K562 (cell line): ENCODE measurements at regions of chrX and their contacts with region 1.

Region 1: GRCh38 chrX:15973299-15973698 is 118.7 kb upstream of the AP1S2 start:
- DNase-seq: peak; percentile 4 to 61 (median 28)
- ATAC-seq: peak; percentile 94
- H3K4me3 ChIP-seq: no peak overlapping the region
- H3K27ac ChIP-seq: no peak overlapping the region
- H3K4me1 ChIP-seq: peaks cover 0 to 19% of the 10 kb centered on the region in 2 experiments; a peak in 2 of 5 replicates
- H3K27me3 ChIP-seq: no peaks in the 10 kb centered on the region
- CTCF ChIP-seq: peak; percentile 69 to 94 (median 92)
- EP300 ChIP-seq: no peak
- POLR2A ChIP-seq: no peak
- RAD21 ChIP-seq: peak; percentile 93

Region 2: GRCh38 chrX:15930585-15930984 is 42.7 kb before region 1 on chrX:
- CTCF ChIA-PET with region 1: interaction called, 3 read pairs
- POLR2A ChIA-PET with region 1: no interaction called
- in situ Hi-C with region 1: no loop called
- intact Hi-C with region 1: loop called (anchors 1 kb)
- DNase-seq: peak in 2 of 4 experiments; percentile 12 to 17
- ATAC-seq: peak; percentile 52; the same call in 1 of the 3 replicates
- H3K4me3 ChIP-seq: no peak overlapping the region
- H3K27ac ChIP-seq: no peak overlapping the region
- H3K4me1 ChIP-seq: no peaks in the 10 kb centered on the region
- H3K27me3 ChIP-seq: no peaks in the 10 kb centered on the region
- CTCF ChIP-seq: peak in 2 of 3 experiments; percentile 18 to 53; a peak in 2 of 6 replicates
- EP300 ChIP-seq: no peak
- POLR2A ChIP-seq: no peak
- RAD21 ChIP-seq: peak; percentile 80 to 88

Region 3: GRCh38 chrX:17082831-17083230 is 1109.5 kb after region 1 on chrX:
- CTCF ChIA-PET with region 1: no interaction called
- POLR2A ChIA-PET with region 1: no interaction called
- in situ Hi-C with region 1: no loop called
- intact Hi-C with region 1: no loop called
- DNase-seq: peak; percentile 8 to 21 (median 14)
- ATAC-seq: peak; percentile 71
- H3K4me3 ChIP-seq: no peak overlapping the region
- H3K27ac ChIP-seq: no peak overlapping the region
- H3K4me1 ChIP-seq: no peaks in the 10 kb centered on the region
- H3K27me3 ChIP-seq: no peaks in the 10 kb centered on the region
- CTCF ChIP-seq: peak in 2 of 3 experiments; percentile 26 to 30; a peak in 2 of 6 replicates
- EP300 ChIP-seq: no peak
- POLR2A ChIP-seq: no peak
- RAD21 ChIP-seq: peak in 1 of 2 experiments; percentile 42; a peak in 2 of 4 replicates